T-cell (primary cell): ENCODE measurements at regions of chr18 and their contacts with region 1.

Region 1: DNA sequence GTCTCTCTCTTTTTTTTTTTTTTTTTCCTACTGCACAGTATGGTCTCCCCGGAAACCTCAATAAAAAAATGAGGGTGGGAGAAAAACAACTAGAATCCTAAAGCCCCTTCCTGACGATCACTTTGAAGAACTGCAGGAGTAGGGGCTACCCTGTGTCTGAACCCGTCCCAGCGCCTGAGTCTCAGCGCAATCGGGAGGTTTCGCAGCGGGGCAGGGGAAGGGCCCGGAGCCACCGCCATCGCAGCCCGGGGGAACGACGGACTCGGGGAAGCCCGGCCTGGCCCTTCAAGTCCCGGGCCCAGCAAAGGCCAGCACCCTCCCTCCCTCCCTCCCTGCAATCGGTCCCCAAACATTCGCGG is 411 bp downstream of the NARS1 start:
- DNase-seq: peak in 5 of 35 experiments; percentile 3 to 41 (median 10)
- ATAC-seq: peak; percentile 7 to 32 (median 25)
- H3K4me3 ChIP-seq: peak overlapping the region; percentile 52 to 55
- H3K4me3 Mint-ChIP-seq: peak overlapping the region; percentile 95 to 98 (median 96)
- H3K27ac ChIP-seq: peak overlapping the region; percentile 80
- H3K27ac Mint-ChIP-seq: peak overlapping the region; percentile 98 to 99
- H3K4me1 ChIP-seq: peaks cover 11 to 28% of the 10 kb centered on the region in 2 experiments
- H3K4me1 Mint-ChIP-seq: peaks cover 34 to 40% (median 37%) of the 10 kb centered on the region in 3 donors
- H3K27me3 ChIP-seq: no peaks in the 10 kb centered on the region
- H3K27me3 Mint-ChIP-seq: no peaks in the 10 kb centered on the region

Region 2: DNA sequence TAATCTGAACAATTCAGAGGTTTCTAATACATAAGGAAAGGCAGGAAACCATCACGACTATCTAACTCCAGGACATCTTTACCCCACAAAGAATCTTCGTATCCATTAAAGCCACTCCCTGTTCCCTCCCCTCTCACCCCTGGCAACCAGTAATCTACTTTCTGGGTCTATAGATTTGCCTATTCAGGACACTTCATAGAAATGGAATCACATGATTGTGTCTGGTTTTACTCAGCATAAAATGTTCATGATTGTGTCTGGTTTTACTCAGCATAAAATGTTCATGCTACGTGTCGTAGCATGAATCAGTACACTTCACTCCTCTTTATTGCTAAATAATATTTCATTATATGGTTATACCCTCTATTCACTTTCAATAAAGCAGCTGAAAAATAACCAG is 46.4 kb before region 1 on chr18:
- CTCF ChIA-PET with region 1: no interaction called
- POLR2A ChIA-PET with region 1: no interaction called
- DNase-seq: no peak
- ATAC-seq: no peak
- H3K4me3 ChIP-seq: no peak overlapping the region
- H3K4me3 Mint-ChIP-seq: no peak overlapping the region
- H3K27ac ChIP-seq: no peak overlapping the region
- H3K27ac Mint-ChIP-seq: no peak overlapping the region
- H3K4me1 ChIP-seq: peaks cover 2 to 3% of the 10 kb centered on the region in 2 experiments
- H3K4me1 Mint-ChIP-seq: peaks cover 2 to 7% (median 4%) of the 10 kb centered on the region in 3 donors
- H3K27me3 ChIP-seq: no peaks in the 10 kb centered on the region
- H3K27me3 Mint-ChIP-seq: no peaks in the 10 kb centered on the region

Region 3: DNA sequence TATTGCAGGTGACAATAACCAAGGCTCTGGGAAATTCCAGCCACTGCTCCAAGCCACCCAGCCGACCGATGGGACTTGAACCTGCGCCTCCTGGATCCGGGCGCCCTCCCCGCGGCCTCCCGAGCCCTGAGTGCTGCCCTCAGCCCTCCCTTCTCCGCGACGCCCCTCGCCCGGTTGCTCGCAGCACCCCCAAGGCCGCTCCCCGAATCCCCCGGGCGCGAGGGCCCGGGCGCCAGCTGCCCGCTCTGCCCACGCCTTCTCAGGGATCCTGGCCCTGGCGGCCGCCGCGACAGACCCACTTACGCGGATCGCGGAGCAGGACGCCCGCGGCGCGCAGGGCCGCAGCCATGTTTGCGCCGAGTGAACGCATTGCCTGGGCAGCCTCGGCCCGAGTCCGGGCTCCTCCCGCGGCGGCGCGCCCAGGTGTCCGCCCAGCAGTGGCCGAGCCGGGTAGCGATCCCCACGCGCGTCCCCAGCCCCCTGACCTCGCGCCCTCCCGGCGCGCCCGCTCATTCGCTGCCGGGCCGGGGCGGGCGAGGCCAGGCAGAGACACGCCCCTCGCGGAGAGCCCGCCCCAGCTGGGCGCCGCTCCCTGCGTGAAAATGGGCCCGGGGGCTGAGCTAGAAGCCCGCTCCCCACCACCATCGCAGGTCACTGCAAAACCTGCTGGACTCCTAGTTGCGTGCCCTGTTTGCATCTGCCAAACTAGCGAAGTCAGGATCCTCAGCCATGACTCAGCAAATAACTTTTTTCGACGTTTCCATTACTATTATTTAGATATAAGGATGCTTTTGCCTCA is 34.8 kb before region 1 on chr18 and contains the start of gene FECH:
- CTCF ChIA-PET with region 1: interaction called, 7 to 11 read pairs
- POLR2A ChIA-PET with region 1: no interaction called
- DNase-seq: peak; percentile 16 to 74 (median 55)
- ATAC-seq: peak; percentile 95 to 99 (median 98)
- H3K4me3 ChIP-seq: peak within 1 kb of the TSS; percentile 32 to 65
- H3K4me3 Mint-ChIP-seq: peak within 1 kb of the TSS; percentile 82 to 88 (median 84)
- H3K27ac ChIP-seq: peak within 1 kb of the TSS; percentile 22
- H3K27ac Mint-ChIP-seq: peak within 1 kb of the TSS; percentile 79 to 85
- H3K4me1 ChIP-seq: peaks cover 0 to 16% of the 10 kb centered on the region in 2 experiments
- H3K4me1 Mint-ChIP-seq: peaks cover 24 to 28% (median 25%) of the 10 kb centered on the region in 3 donors
- H3K27me3 ChIP-seq: no peaks in the 10 kb centered on the region
- H3K27me3 Mint-ChIP-seq: no peaks in the 10 kb centered on the region
- total RNA-seq, gene FECH: 9.6 to 16.2 (median 14.4) TPM

Region 4: GRCh38 chr18:57715681-57716080 is 94.5 kb after region 1 on chr18:
- CTCF ChIA-PET with region 1: no interaction called
- POLR2A ChIA-PET with region 1: no interaction called
- DNase-seq: no peak
- ATAC-seq: no peak
- H3K4me3 ChIP-seq: no peak overlapping the region
- H3K4me3 Mint-ChIP-seq: no peak overlapping the region
- H3K27ac ChIP-seq: no peak overlapping the region
- H3K27ac Mint-ChIP-seq: no peak overlapping the region
- H3K4me1 ChIP-seq: no peaks in the 10 kb centered on the region
- H3K4me1 Mint-ChIP-seq: peaks cover 0 to 8% (median 0%) of the 10 kb centered on the region in 3 donors
- H3K27me3 ChIP-seq: no peaks in the 10 kb centered on the region
- H3K27me3 Mint-ChIP-seq: no peaks in the 10 kb centered on the region

Region 5: DNA sequence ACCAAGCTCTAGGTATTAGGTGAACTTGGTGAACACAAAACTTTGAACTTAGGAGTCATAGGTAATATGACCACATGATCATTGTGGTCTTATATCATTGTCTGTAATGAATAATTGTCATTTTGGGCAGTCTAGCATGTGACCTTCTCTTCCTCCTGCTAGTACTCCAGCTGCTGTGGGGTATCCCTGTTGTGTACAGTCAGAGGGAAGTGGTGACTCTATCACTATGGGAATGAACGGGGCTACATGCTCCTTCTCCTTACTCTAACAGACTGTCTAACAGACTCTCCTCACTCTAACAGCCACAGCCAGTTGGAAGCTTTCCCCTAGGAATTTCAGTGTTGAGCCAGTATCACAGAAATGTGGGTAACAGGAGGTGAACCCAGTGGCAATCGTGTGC is 354.6 kb after region 1 on chr18:
- CTCF ChIA-PET with region 1: no interaction called
- POLR2A ChIA-PET with region 1: interaction called in 1 of 2 experiments, 10 read pairs
- DNase-seq: no peak
- ATAC-seq: no peak
- H3K4me3 ChIP-seq: no peak overlapping the region
- H3K4me3 Mint-ChIP-seq: no peak overlapping the region
- H3K27ac ChIP-seq: no peak overlapping the region
- H3K27ac Mint-ChIP-seq: no peak overlapping the region
- H3K4me1 ChIP-seq: no peaks in the 10 kb centered on the region
- H3K4me1 Mint-ChIP-seq: no peaks in the 10 kb centered on the region
- H3K27me3 ChIP-seq: peaks cover 2 to 8% of the 10 kb centered on the region in 2 experiments
- H3K27me3 Mint-ChIP-seq: peaks cover 18 to 26% of the 10 kb centered on the region in 2 donors

Region 6: GRCh38 chr18:58860747-58861231 is 1239.6 kb after region 1 on chr18:
- CTCF ChIA-PET with region 1: no interaction called
- POLR2A ChIA-PET with region 1: interaction called in 1 of 2 experiments, 12 read pairs
- DNase-seq: no peak
- ATAC-seq: no peak
- H3K4me3 ChIP-seq: no peak overlapping the region
- H3K4me3 Mint-ChIP-seq: no peak overlapping the region
- H3K27ac ChIP-seq: no peak overlapping the region
- H3K27ac Mint-ChIP-seq: no peak overlapping the region
- H3K4me1 ChIP-seq: peaks cover 0 to 15% of the 10 kb centered on the region in 2 experiments
- H3K4me1 Mint-ChIP-seq: peaks cover 13 to 17% (median 17%) of the 10 kb centered on the region in 3 donors
- H3K27me3 ChIP-seq: peaks cover 4 to 28% of the 10 kb centered on the region in 2 experiments
- H3K27me3 Mint-ChIP-seq: peaks cover 54 to 56% of the 10 kb centered on the region in 2 donors